CD8-positive, alpha-beta T cell (primary cell): ENCODE measurements at regions of chr3 and their contacts with region 1.

Region 1: DNA sequence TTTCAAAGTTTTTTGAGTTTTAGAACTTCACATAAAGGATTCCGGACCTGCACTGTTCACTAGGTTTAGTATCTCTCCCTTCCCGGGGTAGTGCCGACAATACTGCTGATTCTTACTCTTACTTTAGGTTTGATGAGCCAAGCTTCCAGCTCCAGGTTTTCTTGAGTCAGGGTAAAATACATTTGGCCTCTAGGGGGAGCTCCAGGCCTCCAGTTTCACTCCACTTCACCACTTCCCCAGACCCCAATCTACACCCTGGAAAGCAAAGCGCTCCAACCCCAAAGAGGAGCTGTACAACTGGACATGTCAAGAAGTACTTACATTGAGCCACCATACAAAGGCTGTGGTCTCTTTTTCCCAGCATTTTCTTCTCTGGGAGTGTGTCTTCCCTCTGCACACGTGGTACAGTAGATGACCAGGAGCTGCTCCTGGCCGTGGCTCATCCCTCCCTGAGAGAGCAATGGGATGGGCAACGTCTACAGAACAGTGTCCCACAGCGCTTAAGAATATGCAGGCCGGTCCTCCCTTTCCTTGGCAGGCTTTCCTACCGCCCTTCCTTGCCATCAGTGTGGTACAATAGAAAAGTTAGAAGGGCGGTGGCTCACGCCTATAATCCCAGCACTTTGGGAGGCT is 93.9 kb upstream of the CCDC80 start:
- DNase-seq: peak; percentile 28 to 80 (median 64)
- ATAC-seq: peak; percentile 73
- H3K4me3 ChIP-seq: no peak overlapping the region
- H3K4me3 Mint-ChIP-seq: no peak overlapping the region
- H3K27ac ChIP-seq: no peak overlapping the region
- H3K27ac Mint-ChIP-seq: no peak overlapping the region
- H3K4me1 ChIP-seq: peaks cover 38% of the 10 kb centered on the region
- H3K4me1 Mint-ChIP-seq: peaks cover 39% of the 10 kb centered on the region
- H3K27me3 ChIP-seq: no peaks in the 10 kb centered on the region
- H3K27me3 Mint-ChIP-seq: no peaks in the 10 kb centered on the region
- CTCF ChIP-seq: peak; percentile 70

Region 2: DNA sequence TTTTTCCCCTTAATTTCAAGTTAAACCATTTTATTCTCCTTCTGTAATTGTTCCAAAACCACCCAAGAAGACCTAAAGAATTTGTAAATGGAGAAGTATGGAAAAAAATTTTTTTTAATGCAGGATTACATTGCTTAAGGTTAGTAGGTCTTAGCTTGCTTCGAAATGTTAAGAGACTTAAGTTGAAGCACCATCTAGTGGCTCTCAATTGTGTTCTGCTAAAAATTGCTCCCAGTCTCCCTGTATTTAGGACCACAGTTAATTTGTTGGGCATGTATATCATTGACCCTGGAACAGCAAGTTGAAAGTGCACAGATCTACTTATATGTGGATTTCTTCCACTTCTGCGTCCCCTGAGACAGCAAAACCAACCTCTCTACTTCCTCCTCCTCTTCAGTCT is 79.4 kb after region 1 on chr3:
- CTCF ChIA-PET with region 1: interaction called, 14 read pairs
- POLR2A ChIA-PET with region 1: interaction called, 3 read pairs
- intact Hi-C with region 1: loop called in 1 of 2 experiments (anchors 2 kb)
- DNase-seq: peak in 2 of 9 experiments; percentile 20 to 34
- ATAC-seq: no peak
- H3K4me3 ChIP-seq: no peak overlapping the region
- H3K4me3 Mint-ChIP-seq: no peak overlapping the region
- H3K27ac ChIP-seq: no peak overlapping the region
- H3K27ac Mint-ChIP-seq: no peak overlapping the region
- H3K4me1 ChIP-seq: no peaks in the 10 kb centered on the region
- H3K4me1 Mint-ChIP-seq: peaks cover 12% of the 10 kb centered on the region
- H3K27me3 ChIP-seq: no peaks in the 10 kb centered on the region
- H3K27me3 Mint-ChIP-seq: no peaks in the 10 kb centered on the region
- CTCF ChIP-seq: no peak

Region 3: GRCh38 chr3:112979240-112979832 is 244.5 kb after region 1 on chr3:
- CTCF ChIA-PET with region 1: interaction called, 141 read pairs
- POLR2A ChIA-PET with region 1: interaction called, 3 read pairs
- intact Hi-C with region 1: loop called (anchors 1 kb)
- DNase-seq: peak in 3 of 9 experiments; percentile 37 to 72 (median 66)
- ATAC-seq: peak; percentile 37
- H3K4me3 ChIP-seq: no peak overlapping the region
- H3K4me3 Mint-ChIP-seq: no peak overlapping the region
- H3K27ac ChIP-seq: no peak overlapping the region
- H3K27ac Mint-ChIP-seq: no peak overlapping the region
- H3K4me1 ChIP-seq: peaks cover 38% of the 10 kb centered on the region
- H3K4me1 Mint-ChIP-seq: peaks cover 56% of the 10 kb centered on the region
- H3K27me3 ChIP-seq: no peaks in the 10 kb centered on the region
- H3K27me3 Mint-ChIP-seq: no peaks in the 10 kb centered on the region
- CTCF ChIP-seq: peak; percentile 93

Region 4: DNA sequence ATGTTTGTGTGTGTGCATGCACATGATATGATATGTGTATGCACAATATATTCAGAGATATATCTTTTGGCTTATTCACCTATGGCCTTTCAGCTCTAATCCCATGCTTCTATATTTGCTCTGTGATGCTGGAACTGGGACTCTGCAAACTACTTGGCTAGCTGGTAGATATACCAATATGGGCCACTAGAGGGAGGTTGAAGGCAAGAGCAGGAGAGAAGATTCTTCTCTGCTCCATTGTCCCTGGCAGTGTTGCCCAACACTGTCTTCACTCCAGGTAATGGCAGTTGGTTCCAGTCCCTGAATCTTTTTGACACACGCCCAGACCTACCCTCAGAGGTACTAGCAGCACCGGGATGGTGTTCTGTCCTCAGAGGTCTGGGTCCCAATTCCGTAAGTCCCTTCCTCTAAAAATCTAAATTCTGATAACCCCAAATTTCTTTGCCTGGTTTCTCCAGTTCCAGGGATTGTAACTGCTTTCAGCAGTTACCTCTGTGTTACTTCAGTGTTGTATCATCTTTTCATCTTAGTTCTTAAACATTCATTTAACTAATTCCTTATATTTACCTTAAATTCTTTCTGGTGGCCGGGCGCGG is 300.7 kb after region 1 on chr3:
- CTCF ChIA-PET with region 1: interaction called, 10 read pairs
- POLR2A ChIA-PET with region 1: no interaction called
- intact Hi-C with region 1: loop called (anchors 2 to 5 kb)
- DNase-seq: peak in 5 of 9 experiments; percentile 13 to 72 (median 39)
- ATAC-seq: peak; percentile 86
- H3K4me3 ChIP-seq: no peak overlapping the region
- H3K4me3 Mint-ChIP-seq: no peak overlapping the region
- H3K27ac ChIP-seq: no peak overlapping the region
- H3K27ac Mint-ChIP-seq: no peak overlapping the region
- H3K4me1 ChIP-seq: no peaks in the 10 kb centered on the region
- H3K4me1 Mint-ChIP-seq: no peaks in the 10 kb centered on the region
- H3K27me3 ChIP-seq: no peaks in the 10 kb centered on the region
- H3K27me3 Mint-ChIP-seq: no peaks in the 10 kb centered on the region
- CTCF ChIP-seq: peak; percentile 81

Region 5: GRCh38 chr3:113136071-113136470 is 401.2 kb after region 1 on chr3:
- CTCF ChIA-PET with region 1: no interaction called
- POLR2A ChIA-PET with region 1: no interaction called
- intact Hi-C with region 1: no loop called
- DNase-seq: peak in 1 of 9 experiments; percentile 9
- ATAC-seq: no peak
- H3K4me3 ChIP-seq: no peak overlapping the region
- H3K4me3 Mint-ChIP-seq: no peak overlapping the region
- H3K27ac ChIP-seq: no peak overlapping the region
- H3K27ac Mint-ChIP-seq: no peak overlapping the region
- H3K4me1 ChIP-seq: no peaks in the 10 kb centered on the region
- H3K4me1 Mint-ChIP-seq: no peaks in the 10 kb centered on the region
- H3K27me3 ChIP-seq: no peaks in the 10 kb centered on the region
- H3K27me3 Mint-ChIP-seq: no peaks in the 10 kb centered on the region
- CTCF ChIP-seq: no peak

Region 6: DNA sequence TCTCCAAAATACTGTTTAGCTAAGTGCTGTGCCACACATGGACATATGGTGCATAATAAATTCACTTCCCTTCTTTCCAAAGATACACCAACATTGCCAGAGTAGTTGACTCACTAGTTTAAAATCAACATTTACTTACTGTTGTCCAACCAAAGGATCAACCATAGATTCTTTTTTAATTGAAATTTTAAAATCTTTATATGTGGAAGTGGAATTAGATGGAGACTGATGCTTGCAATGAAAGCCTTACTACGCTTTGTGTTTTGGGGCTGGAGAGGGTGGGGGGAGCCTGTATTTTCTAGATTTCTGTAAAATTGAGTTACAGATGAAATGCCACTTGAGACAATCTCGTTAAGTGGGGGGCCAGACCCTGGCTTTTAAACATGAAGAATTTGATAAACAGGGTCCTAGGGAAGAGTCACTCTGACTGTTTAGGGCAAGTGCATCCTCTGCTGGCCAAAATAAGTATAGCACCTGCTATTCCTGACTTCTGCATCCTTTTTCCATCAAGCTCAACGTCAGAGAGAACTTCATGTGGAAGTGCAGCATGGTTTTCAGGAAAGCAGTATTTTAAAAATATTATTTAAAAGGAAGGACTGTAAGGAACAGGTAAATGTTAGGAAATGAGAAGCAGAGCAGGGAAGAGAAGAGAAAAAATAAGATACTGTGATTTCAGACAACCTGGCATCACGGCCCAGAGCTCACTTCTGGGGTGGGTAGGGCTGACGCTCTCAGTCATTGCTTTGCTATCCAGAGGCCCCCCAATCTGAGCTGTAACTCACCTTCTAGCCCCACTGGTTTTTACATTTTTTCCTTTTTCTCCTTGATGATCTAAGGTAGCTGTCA is 553.2 kb after region 1 on chr3:
- CTCF ChIA-PET with region 1: interaction called, 16 read pairs
- POLR2A ChIA-PET with region 1: no interaction called
- intact Hi-C with region 1: loop called (anchors 1 kb)
- DNase-seq: peak in 7 of 9 experiments; percentile 14 to 68 (median 56)
- ATAC-seq: peak; percentile 59
- H3K4me3 ChIP-seq: no peak overlapping the region
- H3K4me3 Mint-ChIP-seq: no peak overlapping the region
- H3K27ac ChIP-seq: no peak overlapping the region
- H3K27ac Mint-ChIP-seq: no peak overlapping the region
- H3K4me1 ChIP-seq: no peaks in the 10 kb centered on the region
- H3K4me1 Mint-ChIP-seq: no peaks in the 10 kb centered on the region
- H3K27me3 ChIP-seq: no peaks in the 10 kb centered on the region
- H3K27me3 Mint-ChIP-seq: no peaks in the 10 kb centered on the region
- CTCF ChIP-seq: peak; percentile 99

Region 7: GRCh38 chr3:113825090-113825489 is 1090.3 kb after region 1 on chr3:
- CTCF ChIA-PET with region 1: no interaction called
- POLR2A ChIA-PET with region 1: no interaction called
- intact Hi-C with region 1: no loop called
- DNase-seq: no peak
- ATAC-seq: no peak
- H3K4me3 ChIP-seq: no peak overlapping the region
- H3K4me3 Mint-ChIP-seq: no peak overlapping the region
- H3K27ac ChIP-seq: no peak overlapping the region
- H3K27ac Mint-ChIP-seq: no peak overlapping the region
- H3K4me1 ChIP-seq: no peaks in the 10 kb centered on the region
- H3K4me1 Mint-ChIP-seq: no peaks in the 10 kb centered on the region
- H3K27me3 ChIP-seq: no peaks in the 10 kb centered on the region
- H3K27me3 Mint-ChIP-seq: peaks cover 3% of the 10 kb centered on the region
- CTCF ChIP-seq: no peak